WTC11 (cell line): ENCODE measurements at regions of chr15 and their contacts with region 1.

Region 1: GRCh38 chr15:69475769-69476358 is 23.2 kb downstream of the RPLP1 start:
- DNase-seq: peak; percentile 83
- ATAC-seq: peak; percentile 68
- H3K4me3 Mint-ChIP-seq: no peak overlapping the region
- H3K27ac Mint-ChIP-seq: no peak overlapping the region
- H3K4me1 Mint-ChIP-seq: no peaks in the 10 kb centered on the region
- H3K27me3 Mint-ChIP-seq: no peaks in the 10 kb centered on the region; the same call in 1 of the 2 replicates
- CTCF ChIP-seq: peak; percentile 91

Region 2: DNA sequence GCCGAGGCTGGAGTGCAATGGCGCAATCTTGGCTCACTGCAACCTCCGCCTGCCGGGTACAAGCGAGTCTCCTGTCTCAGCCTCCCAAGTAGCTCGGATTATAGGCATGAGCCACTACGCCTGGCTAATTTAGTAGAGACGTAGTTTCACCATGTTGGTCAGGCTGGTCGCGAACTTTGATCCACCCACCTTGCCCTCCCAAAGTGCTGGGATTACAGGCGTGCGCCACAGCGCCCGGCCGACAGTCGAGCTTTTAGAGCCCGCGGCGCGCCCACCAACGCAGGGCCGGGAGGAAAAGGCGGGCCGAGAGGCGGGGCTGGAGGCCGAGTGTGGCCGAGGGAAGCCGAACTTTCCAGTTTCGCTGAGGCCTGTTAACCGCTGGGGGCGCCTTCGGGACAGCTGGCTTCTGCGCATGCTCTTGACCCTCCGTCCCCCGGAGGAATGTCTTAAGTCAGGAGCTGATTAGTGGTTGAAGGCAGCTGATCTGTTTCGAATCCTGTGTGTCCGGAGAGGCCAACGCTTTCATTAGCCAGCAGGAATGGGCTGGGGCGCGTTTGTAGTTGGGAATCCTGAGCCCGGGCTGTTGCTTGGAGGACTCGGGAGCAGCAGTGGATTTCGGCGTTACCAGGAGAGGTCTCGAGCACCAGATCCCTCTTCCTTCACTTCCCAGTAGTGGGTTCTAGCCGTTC is 13.2 kb before region 1 on chr15:
- CTCF ChIA-PET with region 1: interaction called, 40 read pairs
- POLR2A ChIA-PET with region 1: no interaction called
- DNase-seq: peak; percentile 98
- ATAC-seq: peak; percentile 90
- H3K4me3 Mint-ChIP-seq: peak overlapping the region; percentile 75
- H3K27ac Mint-ChIP-seq: peak overlapping the region; percentile 96
- H3K4me1 Mint-ChIP-seq: peaks cover 16% of the 10 kb centered on the region
- H3K27me3 Mint-ChIP-seq: no peaks in the 10 kb centered on the region
- CTCF ChIP-seq: peak; percentile 69

Region 3: GRCh38 chr15:69502470-69503045 is 26.7 kb after region 1 on chr15:
- CTCF ChIA-PET with region 1: interaction called, 32 read pairs
- POLR2A ChIA-PET with region 1: no interaction called
- DNase-seq: no peak
- ATAC-seq: no peak; the same call in 1 of the 2 replicates
- H3K4me3 Mint-ChIP-seq: no peak overlapping the region
- H3K27ac Mint-ChIP-seq: no peak overlapping the region
- H3K4me1 Mint-ChIP-seq: peaks cover 6% of the 10 kb centered on the region
- H3K27me3 Mint-ChIP-seq: no peaks in the 10 kb centered on the region
- CTCF ChIP-seq: no peak

Region 4: DNA sequence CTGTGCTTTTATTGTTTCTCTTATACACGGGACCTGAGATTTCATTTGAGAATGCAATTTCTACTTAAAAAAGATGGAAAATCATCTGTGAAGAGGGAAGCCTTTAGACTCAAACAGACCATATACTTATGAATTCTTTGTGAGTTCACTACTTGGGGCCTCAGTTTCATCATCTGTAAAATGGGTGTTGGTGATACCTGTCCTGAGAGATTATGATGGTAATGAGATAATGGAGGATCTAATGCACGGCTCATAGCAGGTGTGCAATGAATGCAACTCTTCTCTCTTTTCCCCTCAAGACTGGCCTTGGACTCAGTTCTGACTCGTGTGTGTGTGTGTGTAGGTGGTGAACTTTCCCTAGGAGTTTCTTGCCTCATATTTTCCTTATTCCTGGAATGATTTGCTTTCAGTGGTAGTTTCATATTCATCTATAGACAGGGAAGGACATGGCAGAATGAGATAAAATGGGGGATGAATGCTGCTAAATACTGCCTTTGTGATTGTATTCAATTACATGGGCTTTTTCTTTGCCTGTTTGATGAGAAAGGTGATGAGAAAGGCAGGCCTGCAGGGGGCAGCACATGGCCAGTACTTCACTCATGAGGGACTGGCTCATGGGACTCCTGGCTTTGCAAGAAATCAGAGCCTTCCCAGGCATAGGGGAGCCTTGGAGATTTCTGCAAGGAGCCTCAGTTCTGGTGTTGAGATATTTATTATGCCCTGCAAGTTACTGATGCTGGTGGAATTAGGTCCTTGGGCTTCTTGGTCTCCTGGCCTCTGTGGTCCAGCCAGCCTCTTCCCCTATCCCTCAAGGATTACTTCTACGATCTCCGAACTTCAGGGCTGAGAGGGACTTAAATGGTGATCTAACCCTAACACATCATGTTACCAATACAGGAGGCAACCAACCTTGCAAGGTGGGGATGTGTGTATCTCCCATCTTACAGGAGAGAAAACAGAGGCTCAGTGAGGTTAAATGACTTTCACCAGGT is 47.4 kb after region 1 on chr15:
- CTCF ChIA-PET with region 1: interaction called, 12 read pairs
- POLR2A ChIA-PET with region 1: no interaction called
- DNase-seq: peak; percentile 92
- ATAC-seq: peak; percentile 79
- H3K4me3 Mint-ChIP-seq: no peak overlapping the region
- H3K27ac Mint-ChIP-seq: no peak overlapping the region
- H3K4me1 Mint-ChIP-seq: peaks cover 39% of the 10 kb centered on the region
- H3K27me3 Mint-ChIP-seq: no peaks in the 10 kb centered on the region; the same call in none of the 2 replicates
- CTCF ChIP-seq: peak; percentile 68

Region 5: DNA sequence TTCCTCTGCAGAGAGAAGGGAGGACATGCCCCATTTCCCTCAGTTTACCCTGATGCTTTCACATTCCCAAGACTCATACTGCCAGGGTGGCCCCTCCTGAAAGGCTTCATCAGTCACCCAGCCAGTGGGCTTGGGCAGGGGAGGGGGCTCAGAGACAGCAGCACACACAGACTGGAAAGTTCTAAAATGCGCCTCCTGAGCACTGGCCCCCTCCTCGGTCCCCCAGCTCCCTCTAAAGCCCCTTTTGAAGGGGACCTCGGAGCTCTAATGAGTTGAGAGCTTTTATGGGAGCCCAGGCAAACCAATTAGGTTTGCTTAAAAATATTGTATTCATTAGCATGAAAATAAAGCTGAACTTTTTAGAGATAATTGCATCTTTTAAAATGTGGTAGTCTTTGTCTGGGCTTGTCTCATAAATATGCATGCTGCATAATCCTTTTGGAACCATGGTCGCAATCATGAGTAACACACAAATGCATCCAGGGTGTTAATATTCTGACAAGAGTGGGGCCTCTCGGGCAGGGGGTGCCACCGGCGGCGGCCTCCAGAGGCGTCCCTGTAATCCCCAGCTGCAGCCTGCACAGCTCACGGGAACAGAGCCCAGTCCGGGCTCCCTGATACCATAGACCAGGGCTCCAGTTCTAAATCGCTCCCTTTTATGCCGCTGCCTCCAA is 55.3 kb after region 1 on chr15:
- CTCF ChIA-PET with region 1: interaction called, 14 read pairs
- POLR2A ChIA-PET with region 1: no interaction called
- DNase-seq: no peak
- ATAC-seq: peak; percentile 59
- H3K4me3 Mint-ChIP-seq: 0 out of 2 replicates have a peak overlapping the region, but pooled peaks have one; percentile 12
- H3K27ac Mint-ChIP-seq: no peak overlapping the region
- H3K4me1 Mint-ChIP-seq: peaks cover 39% of the 10 kb centered on the region
- H3K27me3 Mint-ChIP-seq: no peaks in the 10 kb centered on the region; the same call in 1 of the 2 replicates
- CTCF ChIP-seq: no peak

Region 6: GRCh38 chr15:69576035-69576526 is 100.2 kb after region 1 on chr15:
- CTCF ChIA-PET with region 1: interaction called, 17 read pairs
- POLR2A ChIA-PET with region 1: no interaction called
- DNase-seq: peak; percentile 54
- ATAC-seq: peak; percentile 63
- H3K4me3 Mint-ChIP-seq: no peak overlapping the region
- H3K27ac Mint-ChIP-seq: no peak overlapping the region
- H3K4me1 Mint-ChIP-seq: peaks cover 19% of the 10 kb centered on the region
- H3K27me3 Mint-ChIP-seq: no peaks in the 10 kb centered on the region
- CTCF ChIP-seq: peak; percentile 54

Region 7: GRCh38 chr15:69723404-69724096 is 247.7 kb after region 1 on chr15:
- CTCF ChIA-PET with region 1: interaction called, 11 read pairs
- POLR2A ChIA-PET with region 1: no interaction called
- DNase-seq: peak; percentile 28
- ATAC-seq: peak; percentile 74
- H3K4me3 Mint-ChIP-seq: no peak overlapping the region
- H3K27ac Mint-ChIP-seq: no peak overlapping the region
- H3K4me1 Mint-ChIP-seq: peaks cover 35% of the 10 kb centered on the region
- H3K27me3 Mint-ChIP-seq: peaks cover 10% of the 10 kb centered on the region
- CTCF ChIP-seq: no peak